ENCODE measurements at regions of chr1 and their contacts with region 1.

Region 1: GRCh38 chr1:64082459-64082858 is 121.0 kb upstream of the UBE2U start:
- DNase-seq: peak; percentile 84
- H3K4me3 ChIP-seq: no peak overlapping the region
- H3K27ac ChIP-seq: peak overlapping the region; percentile 38
- H3K4me1 ChIP-seq: peaks cover 36% of the 10 kb centered on the region
- H3K27me3 ChIP-seq: no peaks in the 10 kb centered on the region
- CTCF ChIP-seq: no peak

Region 2: DNA sequence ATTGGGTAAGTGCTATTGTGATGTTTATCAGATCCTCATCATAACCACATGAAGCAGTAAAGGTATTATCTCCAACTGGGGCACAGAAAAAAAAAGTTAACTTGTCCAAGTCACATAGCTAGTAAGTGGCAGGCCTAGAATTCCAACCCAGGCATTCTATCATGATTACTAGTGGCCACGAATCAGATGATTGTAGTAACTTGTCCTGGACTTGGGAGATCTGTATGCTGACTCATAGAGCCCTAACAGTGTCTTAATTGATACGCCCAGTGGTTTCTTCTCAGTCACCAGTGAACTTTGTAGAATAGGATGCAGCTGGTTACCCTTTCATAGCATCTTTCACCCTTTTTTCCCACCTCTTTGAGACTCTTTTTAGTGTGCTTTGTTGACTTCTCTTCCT is 29.8 kb after region 1 on chr1:
- CTCF ChIA-PET with region 1: no interaction called
- dilution Hi-C with region 1: no loop called
- in situ Hi-C with region 1: no loop called
- intact Hi-C with region 1: loop called (anchors 1 kb)
- DNase-seq: peak; percentile 98
- H3K4me3 ChIP-seq: no peak overlapping the region
- H3K27ac ChIP-seq: peak overlapping the region; percentile 93
- H3K4me1 ChIP-seq: peaks cover 39% of the 10 kb centered on the region
- H3K27me3 ChIP-seq: no peaks in the 10 kb centered on the region
- CTCF ChIP-seq: no peak